ENCODE measurements at regions of chr6 and their contacts with region 1.

Region 1: GRCh38 chr6:116287689-116288282 is 8.1 kb upstream of the TSPYL1 start:
- DNase-seq: peak; percentile 38
- ATAC-seq: peak; percentile 69
- H3K4me3 ChIP-seq: no peak overlapping the region
- H3K27ac ChIP-seq: no peak overlapping the region
- H3K4me1 ChIP-seq: no peaks in the 10 kb centered on the region
- H3K27me3 ChIP-seq: no peaks in the 10 kb centered on the region
- CTCF ChIP-seq: peak; percentile 80
- EP300 ChIP-seq: no peak
- POLR2A ChIP-seq: no peak
- RAD21 ChIP-seq: peak; percentile 23; the same call in 1 of the 2 replicates

Region 2: GRCh38 chr6:116316772-116317467 is 29.1 kb after region 1 on chr6:
- CTCF ChIA-PET with region 1: interaction called, 3 read pairs
- POLR2A ChIA-PET with region 1: no interaction called
- in situ Hi-C with region 1: no loop called
- intact Hi-C with region 1: loop called (anchors 1 kb)
- DNase-seq: peak; percentile 24
- ATAC-seq: peak; percentile 81
- H3K4me3 ChIP-seq: no peak overlapping the region
- H3K27ac ChIP-seq: no peak overlapping the region
- H3K4me1 ChIP-seq: no peaks in the 10 kb centered on the region
- H3K27me3 ChIP-seq: no peaks in the 10 kb centered on the region
- CTCF ChIP-seq: peak; percentile 29; the same call in 1 of the 2 replicates
- EP300 ChIP-seq: no peak
- POLR2A ChIP-seq: no peak
- RAD21 ChIP-seq: no peak

Region 3: GRCh38 chr6:116371120-116371917 is 83.5 kb after region 1 on chr6:
- CTCF ChIA-PET with region 1: no interaction called
- POLR2A ChIA-PET with region 1: no interaction called
- in situ Hi-C with region 1: no loop called
- intact Hi-C with region 1: loop called (anchors 5 kb)
- DNase-seq: no peak
- ATAC-seq: peak; percentile 82
- H3K4me3 ChIP-seq: peak overlapping the region; percentile 51 to 71 (median 51)
- H3K27ac ChIP-seq: no peak overlapping the region
- H3K4me1 ChIP-seq: peaks cover 11% of the 10 kb centered on the region
- H3K27me3 ChIP-seq: peaks cover 9 to 51% of the 10 kb centered on the region in 2 experiments
- CTCF ChIP-seq: no peak
- EP300 ChIP-seq: no peak
- POLR2A ChIP-seq: no peak
- RAD21 ChIP-seq: no peak

Region 4: GRCh38 chr6:116561377-116562018 is 273.7 kb after region 1 on chr6:
- CTCF ChIA-PET with region 1: interaction called, 10 read pairs
- POLR2A ChIA-PET with region 1: no interaction called
- in situ Hi-C with region 1: no loop called
- intact Hi-C with region 1: loop called (anchors 1 kb)
- DNase-seq: peak; percentile 70
- ATAC-seq: peak; percentile 78
- H3K4me3 ChIP-seq: peak overlapping the region in 2 of 3 experiments; percentile 13 to 28; a peak in 2 of 6 replicates
- H3K27ac ChIP-seq: no peak overlapping the region
- H3K4me1 ChIP-seq: peaks cover 31% of the 10 kb centered on the region
- H3K27me3 ChIP-seq: no peaks in the 10 kb centered on the region; a peak in 3 of 5 replicates
- CTCF ChIP-seq: peak; percentile 91
- EP300 ChIP-seq: no peak
- POLR2A ChIP-seq: no peak
- RAD21 ChIP-seq: peak; percentile 78

Region 5: DNA sequence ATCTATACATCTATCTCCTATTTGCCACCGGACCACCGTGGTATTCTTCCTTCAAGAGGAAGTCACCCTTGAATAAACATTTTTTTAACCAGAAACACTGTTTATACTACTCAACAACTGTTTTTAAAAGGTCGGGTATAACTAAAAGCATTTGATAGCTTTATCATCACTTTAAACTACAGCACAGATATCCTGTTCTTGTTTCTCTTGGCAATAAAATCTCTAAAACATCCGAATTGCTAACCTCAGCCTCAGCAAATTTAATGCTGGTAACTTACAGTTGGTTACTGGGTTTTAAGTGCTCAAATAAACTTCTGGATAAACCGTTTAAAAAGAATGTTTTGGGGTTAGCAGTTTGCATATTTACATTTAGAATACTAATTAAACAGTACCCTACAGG is 360.4 kb after region 1 on chr6:
- CTCF ChIA-PET with region 1: interaction called, 6 read pairs
- POLR2A ChIA-PET with region 1: no interaction called
- in situ Hi-C with region 1: loop called (anchors 25 kb)
- intact Hi-C with region 1: loop called (anchors 5 kb)
- DNase-seq: no peak
- ATAC-seq: no peak
- H3K4me3 ChIP-seq: no peak overlapping the region
- H3K27ac ChIP-seq: no peak overlapping the region
- H3K4me1 ChIP-seq: no peaks in the 10 kb centered on the region
- H3K27me3 ChIP-seq: no peaks in the 10 kb centered on the region
- CTCF ChIP-seq: no peak
- EP300 ChIP-seq: no peak
- POLR2A ChIP-seq: no peak
- RAD21 ChIP-seq: no peak